ENCODE measurements at regions of chr14 and their contacts with region 1.

Region 1: GRCh38 chr14:59428581-59429012 is 36.6 kb downstream of the GPR135 start:
- DNase-seq: peak; percentile 53
- H3K4me3 ChIP-seq: no peak overlapping the region
- H3K27ac ChIP-seq: no peak overlapping the region
- H3K4me1 ChIP-seq: peaks cover 11% of the 10 kb centered on the region
- H3K27me3 ChIP-seq: no peaks in the 10 kb centered on the region
- CTCF ChIP-seq: peak; percentile 8 to 9
- POLR2A ChIP-seq: no peak

Region 2: DNA sequence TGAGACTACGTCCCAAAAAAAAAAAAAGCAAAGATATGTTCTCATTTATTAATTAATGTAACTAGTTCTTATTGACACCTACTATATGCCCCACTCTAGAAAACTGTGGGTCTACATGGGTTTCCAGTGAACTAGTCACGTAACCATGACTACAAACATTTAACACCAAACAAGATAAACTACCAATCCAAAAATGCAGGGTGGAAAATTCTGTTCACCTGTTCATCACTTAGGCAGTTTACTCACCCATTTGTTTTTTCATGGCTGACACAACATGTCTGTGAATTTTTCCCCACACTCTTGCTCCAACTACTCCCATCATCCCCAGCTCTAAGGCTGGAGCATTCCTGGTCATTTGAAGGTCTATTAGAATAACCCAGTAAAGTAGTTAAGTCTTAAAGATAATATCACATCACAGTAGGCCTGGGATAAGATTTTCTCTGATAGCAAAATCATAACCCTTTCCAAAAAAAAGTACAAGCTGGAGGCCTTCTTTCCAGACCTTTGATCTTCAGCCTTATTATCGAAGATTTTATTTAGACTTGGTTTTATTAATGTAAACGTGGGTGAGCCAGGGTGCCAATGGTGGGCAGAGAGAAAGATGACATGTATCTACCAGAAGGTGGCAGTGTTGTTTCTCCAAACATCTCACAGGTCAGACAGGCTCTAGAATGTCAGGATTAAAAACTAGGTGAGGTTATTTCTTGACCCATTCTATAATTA is 301.7 kb before region 1 on chr14:
- CTCF ChIA-PET with region 1: interaction called, 13 read pairs
- POLR2A ChIA-PET with region 1: no interaction called
- dilution Hi-C with region 1: no loop called
- intact Hi-C with region 1: no loop called
- DNase-seq: peak; percentile 64
- H3K4me3 ChIP-seq: no peak overlapping the region
- H3K27ac ChIP-seq: no peak overlapping the region
- H3K4me1 ChIP-seq: no peaks in the 10 kb centered on the region
- H3K27me3 ChIP-seq: peaks cover 5 to 6% of the 10 kb centered on the region in 2 experiments
- CTCF ChIP-seq: peak; percentile 58 to 60
- POLR2A ChIP-seq: no peak

Region 3: GRCh38 chr14:59132796-59133494 is 295.7 kb before region 1 on chr14:
- CTCF ChIA-PET with region 1: interaction called, 13 read pairs
- POLR2A ChIA-PET with region 1: no interaction called
- dilution Hi-C with region 1: no loop called
- intact Hi-C with region 1: no loop called
- DNase-seq: peak; percentile 31
- H3K4me3 ChIP-seq: no peak overlapping the region
- H3K27ac ChIP-seq: no peak overlapping the region
- H3K4me1 ChIP-seq: no peaks in the 10 kb centered on the region
- H3K27me3 ChIP-seq: peaks cover 0 to 2% of the 10 kb centered on the region in 2 experiments
- CTCF ChIP-seq: peak in 1 of 2 donors; percentile 34
- POLR2A ChIP-seq: no peak

Region 4: GRCh38 chr14:59181791-59182190 is 246.8 kb before region 1 on chr14:
- CTCF ChIA-PET with region 1: interaction called, 8 read pairs
- POLR2A ChIA-PET with region 1: no interaction called
- dilution Hi-C with region 1: no loop called
- intact Hi-C with region 1: loop called (anchors 1 kb)
- DNase-seq: no peak
- H3K4me3 ChIP-seq: no peak overlapping the region
- H3K27ac ChIP-seq: no peak overlapping the region
- H3K4me1 ChIP-seq: no peaks in the 10 kb centered on the region
- H3K27me3 ChIP-seq: peaks cover 15 to 28% of the 10 kb centered on the region in 2 experiments
- CTCF ChIP-seq: no peak
- POLR2A ChIP-seq: no peak

Region 5: DNA sequence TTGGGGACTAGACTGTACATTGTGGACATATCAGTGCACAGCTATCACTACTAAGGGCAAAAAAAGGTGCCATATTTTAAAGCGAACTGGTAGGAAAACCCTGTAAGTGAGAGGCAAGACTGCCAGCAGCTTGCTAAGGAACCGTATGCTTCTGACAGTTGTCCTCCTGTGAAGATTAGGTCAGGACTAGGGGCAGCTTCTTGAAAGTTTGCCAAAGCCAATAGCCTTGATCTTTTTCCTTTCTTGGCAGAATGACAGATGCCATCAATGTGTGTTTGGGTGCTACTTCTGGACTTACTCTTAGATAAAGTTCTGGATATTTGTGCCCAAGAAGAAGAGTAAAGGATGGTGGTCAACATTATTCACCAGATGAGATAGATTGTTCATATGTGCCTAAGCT is 232.7 kb before region 1 on chr14:
- CTCF ChIA-PET with region 1: interaction called, 18 read pairs
- POLR2A ChIA-PET with region 1: no interaction called
- dilution Hi-C with region 1: no loop called
- intact Hi-C with region 1: no loop called
- DNase-seq: no peak
- H3K4me3 ChIP-seq: no peak overlapping the region
- H3K27ac ChIP-seq: no peak overlapping the region
- H3K4me1 ChIP-seq: no peaks in the 10 kb centered on the region
- H3K27me3 ChIP-seq: no peaks in the 10 kb centered on the region
- CTCF ChIP-seq: no peak
- POLR2A ChIP-seq: no peak

Region 6: DNA sequence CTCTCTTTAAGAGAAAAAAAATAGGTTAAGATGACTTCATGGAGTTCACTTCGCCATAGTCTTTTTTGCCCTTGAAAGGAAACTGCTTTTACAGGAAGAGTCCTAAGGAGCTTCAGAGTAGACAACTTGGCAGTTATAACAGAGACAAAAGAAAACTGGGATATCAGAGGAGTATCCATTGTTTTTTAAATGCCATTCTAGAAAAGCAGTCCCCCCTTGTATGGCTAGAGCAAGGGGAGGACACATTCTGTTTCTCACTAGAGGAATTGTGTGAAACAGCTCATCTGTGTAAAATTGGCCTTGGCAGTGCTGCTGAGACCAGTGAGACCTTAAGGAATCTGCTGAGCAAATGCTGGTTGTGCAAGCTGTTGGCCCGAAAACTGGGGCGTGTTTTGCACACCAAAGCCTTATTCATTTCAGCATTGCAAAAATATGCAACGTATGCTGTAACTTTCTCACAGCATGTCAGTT is 91.4 kb before region 1 on chr14:
- CTCF ChIA-PET with region 1: interaction called, 12 read pairs
- POLR2A ChIA-PET with region 1: no interaction called
- dilution Hi-C with region 1: no loop called
- intact Hi-C with region 1: no loop called
- DNase-seq: peak; percentile 70
- H3K4me3 ChIP-seq: no peak overlapping the region
- H3K27ac ChIP-seq: peak overlapping the region; percentile 87
- H3K4me1 ChIP-seq: peaks cover 61% of the 10 kb centered on the region
- H3K27me3 ChIP-seq: no peaks in the 10 kb centered on the region
- CTCF ChIP-seq: no peak
- POLR2A ChIP-seq: no peak

Region 7: DNA sequence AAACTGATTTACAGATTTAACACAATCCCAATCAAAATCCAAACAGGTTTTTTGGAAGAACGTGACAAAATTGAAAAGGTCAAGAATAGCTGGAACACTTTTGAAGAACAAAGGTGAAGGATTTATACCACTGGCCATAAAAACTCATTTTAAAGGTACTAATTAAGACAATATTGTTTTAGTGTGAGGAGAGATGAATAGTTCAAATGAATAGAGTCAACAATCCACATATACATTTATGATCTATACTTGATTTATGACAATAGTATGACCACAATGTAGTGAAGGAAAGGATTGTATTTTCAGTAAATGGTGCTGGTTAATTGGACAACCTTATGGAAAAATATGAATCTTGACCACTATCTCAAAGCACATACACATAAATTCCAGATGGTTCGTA is 118.7 kb after region 1 on chr14:
- CTCF ChIA-PET with region 1: no interaction called
- POLR2A ChIA-PET with region 1: no interaction called
- dilution Hi-C with region 1: no loop called
- intact Hi-C with region 1: no loop called
- DNase-seq: no peak
- H3K4me3 ChIP-seq: no peak overlapping the region
- H3K27ac ChIP-seq: no peak overlapping the region
- H3K4me1 ChIP-seq: no peaks in the 10 kb centered on the region
- H3K27me3 ChIP-seq: no peaks in the 10 kb centered on the region
- CTCF ChIP-seq: no peak
- POLR2A ChIP-seq: no peak

Region 8: GRCh38 chr14:60327447-60328331 is 899.1 kb after region 1 on chr14:
- CTCF ChIA-PET with region 1: no interaction called
- POLR2A ChIA-PET with region 1: no interaction called
- dilution Hi-C with region 1: no loop called
- intact Hi-C with region 1: no loop called
- DNase-seq: no peak
- H3K4me3 ChIP-seq: no peak overlapping the region
- H3K27ac ChIP-seq: no peak overlapping the region
- H3K4me1 ChIP-seq: peaks cover 2% of the 10 kb centered on the region
- H3K27me3 ChIP-seq: peaks cover 38 to 55% of the 10 kb centered on the region in 2 experiments
- CTCF ChIP-seq: peak in 1 of 2 donors; percentile 4
- POLR2A ChIP-seq: no peak

Measured in endothelial cell of umbilical vein (primary cell).